ENCODE measurements at regions of chr1 and their contacts with region 1.

Region 1: GRCh38 chr1:202498542-202498941 is 150.0 kb downstream of the PPP1R12B start:
- DNase-seq: no peak
- ATAC-seq: no peak
- H3K4me3 ChIP-seq: no peak overlapping the region
- H3K4me1 ChIP-seq: no peaks in the 10 kb centered on the region
- CTCF ChIP-seq: no peak

Region 2: DNA sequence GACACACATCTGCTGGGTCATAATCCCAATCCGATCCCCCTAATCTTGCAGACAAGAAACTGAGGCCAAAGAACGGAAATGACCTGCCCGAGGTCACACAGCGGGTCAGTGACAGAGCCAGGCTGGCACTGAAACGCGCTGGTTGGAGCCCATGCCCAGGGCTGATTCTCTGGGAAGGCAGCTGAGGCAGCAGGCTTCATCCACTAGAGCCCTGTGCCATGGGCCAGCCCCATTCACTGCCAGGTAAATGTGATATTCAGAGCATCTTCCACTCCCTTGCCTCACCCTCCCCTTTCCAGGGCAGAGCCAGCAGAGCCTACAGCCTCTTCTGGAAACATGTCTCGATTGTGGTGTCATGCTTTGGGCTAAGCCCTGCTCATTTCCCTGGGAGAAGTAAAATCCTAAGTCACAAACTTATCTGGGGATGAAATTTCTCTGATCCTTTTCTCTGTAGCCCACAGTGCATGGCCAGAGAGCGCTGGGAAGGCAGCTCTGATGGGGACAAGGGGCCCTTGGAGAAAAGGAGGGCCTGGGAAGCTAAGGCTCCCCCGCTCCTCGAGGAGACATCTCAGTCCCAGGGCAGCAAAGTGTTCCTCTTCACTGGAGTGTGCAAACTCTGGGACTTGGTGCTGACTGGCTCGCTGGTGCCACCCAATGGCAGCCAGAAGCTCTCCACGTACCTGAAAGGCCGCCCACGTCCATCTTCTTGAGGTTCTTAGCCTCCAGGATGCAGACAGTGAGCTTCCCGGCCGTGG is 101.3 kb after region 1 on chr1:
- intact Hi-C with region 1: loop called in 1 of 2 experiments (anchors 5 kb)
- DNase-seq: peak in 2 of 3 donors; percentile 43 to 67
- ATAC-seq: peak; percentile 81
- H3K4me3 ChIP-seq: no peak overlapping the region
- H3K4me1 ChIP-seq: no peaks in the 10 kb centered on the region
- CTCF ChIP-seq: peak; percentile 36

Measured in mucosa of descending colon (tissue), 3 donors.